Endothelial cell of umbilical vein (primary cell): ENCODE measurements at regions of chr10 and their contacts with region 1.

Region 1: DNA sequence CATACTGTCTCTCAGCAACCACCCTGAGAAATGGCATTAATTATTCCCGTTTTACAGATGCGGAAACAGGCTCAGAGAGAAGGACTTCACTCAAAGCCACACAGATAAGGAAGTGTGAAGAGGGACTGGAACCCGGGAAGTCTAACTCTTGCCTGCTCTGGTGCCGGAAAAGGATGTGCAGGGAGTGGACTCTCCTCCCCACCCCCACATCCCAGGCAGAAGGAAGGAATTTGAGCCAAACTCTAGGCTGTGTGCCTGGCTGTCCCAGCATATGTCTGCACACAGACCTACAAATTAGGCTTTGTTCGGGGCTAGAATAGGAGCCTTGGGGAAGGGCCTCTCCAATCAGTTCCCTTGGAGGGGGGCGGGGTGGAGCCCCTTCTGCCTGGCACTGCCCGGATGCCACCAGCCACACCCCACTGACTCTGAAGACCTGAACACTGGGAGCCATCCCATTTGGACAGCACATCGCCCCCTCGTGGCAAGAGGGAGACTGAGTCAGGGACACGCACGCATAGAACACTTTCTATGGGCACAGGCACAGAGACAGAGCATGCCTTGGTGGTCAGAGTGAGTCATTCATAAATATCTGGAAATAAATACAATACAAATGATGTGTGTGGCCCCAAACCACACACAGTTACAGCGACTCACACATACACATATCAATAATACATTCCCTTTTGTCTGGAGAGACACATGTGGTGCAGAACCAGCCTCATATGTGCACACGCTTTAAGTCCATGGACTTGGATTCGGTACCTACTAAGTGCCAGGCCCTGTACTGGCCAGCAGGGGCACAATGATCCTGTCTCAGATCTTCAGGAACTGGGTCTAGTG is 13.1 kb downstream of the LZTS2 start:
- DNase-seq: peak; percentile 95
- H3K4me3 ChIP-seq: no peak overlapping the region
- H3K27ac ChIP-seq: peak overlapping the region; percentile 12
- H3K4me1 ChIP-seq: peaks cover 13% of the 10 kb centered on the region
- H3K27me3 ChIP-seq: no peaks in the 10 kb centered on the region
- CTCF ChIP-seq: peak; percentile 80 to 96
- POLR2A ChIP-seq: no peak

Region 2: GRCh38 chr10:100670828-100671479 is 341.8 kb before region 1 on chr10:
- CTCF ChIA-PET with region 1: interaction called, 10 read pairs
- POLR2A ChIA-PET with region 1: no interaction called
- dilution Hi-C with region 1: no loop called
- intact Hi-C with region 1: loop called (anchors 5 kb)
- DNase-seq: no peak
- H3K4me3 ChIP-seq: no peak overlapping the region
- H3K27ac ChIP-seq: no peak overlapping the region
- H3K4me1 ChIP-seq: no peaks in the 10 kb centered on the region
- H3K27me3 ChIP-seq: peaks cover 32 to 42% of the 10 kb centered on the region in 2 experiments
- CTCF ChIP-seq: peak; percentile 63 to 78
- POLR2A ChIP-seq: no peak

Region 3: DNA sequence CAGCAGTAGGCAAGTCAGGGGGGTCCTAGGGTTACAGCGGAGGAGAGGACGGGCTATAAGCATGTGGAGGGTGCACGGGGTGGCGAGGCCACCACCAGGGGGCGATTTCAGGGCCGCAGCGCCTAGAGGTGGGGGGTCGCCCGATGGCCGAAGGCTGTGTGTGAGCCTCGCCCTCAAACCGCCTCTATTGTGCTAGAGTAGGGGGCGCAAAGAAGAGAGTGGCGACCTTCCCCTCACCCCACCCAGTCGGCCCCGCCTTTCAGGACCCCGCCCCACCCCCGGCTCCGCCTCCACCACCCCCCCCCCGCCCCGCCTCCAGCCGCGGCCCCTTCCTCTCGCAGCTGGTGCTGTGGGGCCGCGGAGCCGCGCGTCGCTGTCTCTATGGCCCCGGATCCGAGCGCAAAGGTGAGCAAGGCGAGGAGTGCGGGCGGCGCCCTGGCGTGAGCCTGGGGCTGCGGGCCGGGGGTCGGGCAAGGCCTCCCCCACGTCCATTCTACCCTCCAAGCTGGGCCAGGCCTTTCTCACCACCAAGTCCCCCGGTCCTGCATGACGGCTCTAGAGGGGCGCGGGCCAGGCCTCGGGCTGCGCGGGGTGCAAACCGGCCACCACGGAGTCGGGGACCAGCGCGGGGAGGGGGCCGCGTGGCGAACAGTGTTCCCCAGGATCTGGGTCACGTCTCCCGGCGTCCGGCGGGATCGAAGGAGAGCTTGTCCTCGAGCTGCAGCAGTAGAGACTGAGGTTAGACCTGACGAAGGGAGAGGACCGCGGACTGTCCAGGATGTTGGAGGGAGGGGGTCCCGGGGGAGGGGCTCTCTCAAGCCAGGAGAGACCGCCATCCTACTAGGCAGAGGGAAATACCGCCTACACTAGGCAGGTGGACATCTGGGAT is 43.3 kb before region 1 on chr10 and contains the start of gene SEMA4G:
- CTCF ChIA-PET with region 1: interaction called, 54 read pairs
- POLR2A ChIA-PET with region 1: no interaction called
- dilution Hi-C with region 1: no loop called
- intact Hi-C with region 1: loop called (anchors 1 kb)
- DNase-seq: peak; percentile 43
- H3K4me3 ChIP-seq: peak within 1 kb of the TSS; percentile 57 to 75 (median 62)
- H3K27ac ChIP-seq: no peak within 1 kb of the TSS
- H3K4me1 ChIP-seq: peaks cover 12% of the 10 kb centered on the region
- H3K27me3 ChIP-seq: no peaks in the 10 kb centered on the region
- CTCF ChIP-seq: peak; percentile 76 to 88
- POLR2A ChIP-seq: no peak
- total RNA-seq, gene SEMA4G: 6.0 and 6.7 TPM in 2 replicates

Region 4: GRCh38 chr10:100998991-100999741 is 13.6 kb before region 1 on chr10:
- CTCF ChIA-PET with region 1: interaction called, 254 read pairs
- POLR2A ChIA-PET with region 1: interaction called, 3 read pairs
- dilution Hi-C with region 1: no loop called
- intact Hi-C with region 1: loop called (anchors 1 kb)
- DNase-seq: peak; percentile 75
- H3K4me3 ChIP-seq: peak overlapping the region; percentile 6 to 85 (median 29)
- H3K27ac ChIP-seq: peak overlapping the region; percentile 86
- H3K4me1 ChIP-seq: peaks cover 33% of the 10 kb centered on the region
- H3K27me3 ChIP-seq: no peaks in the 10 kb centered on the region
- CTCF ChIP-seq: peak; percentile 92 to 95
- POLR2A ChIP-seq: peak; percentile 76

Region 5: GRCh38 chr10:101050208-101051069 is 37.7 kb after region 1 on chr10:
- CTCF ChIA-PET with region 1: interaction called, 14 read pairs
- POLR2A ChIA-PET with region 1: no interaction called
- dilution Hi-C with region 1: no loop called
- intact Hi-C with region 1: no loop called
- DNase-seq: peak; percentile 49
- H3K4me3 ChIP-seq: no peak overlapping the region
- H3K27ac ChIP-seq: no peak overlapping the region
- H3K4me1 ChIP-seq: no peaks in the 10 kb centered on the region
- H3K27me3 ChIP-seq: peaks cover 36 to 38% of the 10 kb centered on the region in 2 experiments
- CTCF ChIP-seq: peak; percentile 87 to 97
- POLR2A ChIP-seq: no peak